PC-9 (cell line): ENCODE measurements at regions of chr7 and their contacts with region 1.

Region 1: GRCh38 chr7:21767300-21767900 is 178.3 kb downstream of the CDCA7L start:
- DNase-seq: peak; percentile 55 to 87
- H3K4me3 ChIP-seq: no peak overlapping the region
- H3K27ac ChIP-seq: no peak overlapping the region
- H3K4me1 ChIP-seq: no peaks in the 10 kb centered on the region
- H3K27me3 ChIP-seq: no peaks in the 10 kb centered on the region
- CTCF ChIP-seq: peak; percentile 97

Region 2: GRCh38 chr7:21256310-21256877 is 511.0 kb before region 1 on chr7:
- CTCF ChIA-PET with region 1: interaction called, 3 read pairs
- POLR2A ChIA-PET with region 1: no interaction called
- intact Hi-C with region 1: loop called (anchors 1 kb)
- DNase-seq: peak in 1 of 2 experiments; percentile 43
- H3K4me3 ChIP-seq: no peak overlapping the region
- H3K27ac ChIP-seq: no peak overlapping the region
- H3K4me1 ChIP-seq: no peaks in the 10 kb centered on the region
- H3K27me3 ChIP-seq: no peaks in the 10 kb centered on the region
- CTCF ChIP-seq: peak; percentile 92

Region 3: GRCh38 chr7:21514062-21514461 is 253.3 kb before region 1 on chr7:
- CTCF ChIA-PET with region 1: no interaction called
- POLR2A ChIA-PET with region 1: no interaction called
- intact Hi-C with region 1: loop called (anchors 10 kb)
- DNase-seq: no peak
- H3K4me3 ChIP-seq: no peak overlapping the region
- H3K27ac ChIP-seq: no peak overlapping the region
- H3K4me1 ChIP-seq: no peaks in the 10 kb centered on the region
- H3K27me3 ChIP-seq: no peaks in the 10 kb centered on the region
- CTCF ChIP-seq: no peak

Region 4: DNA sequence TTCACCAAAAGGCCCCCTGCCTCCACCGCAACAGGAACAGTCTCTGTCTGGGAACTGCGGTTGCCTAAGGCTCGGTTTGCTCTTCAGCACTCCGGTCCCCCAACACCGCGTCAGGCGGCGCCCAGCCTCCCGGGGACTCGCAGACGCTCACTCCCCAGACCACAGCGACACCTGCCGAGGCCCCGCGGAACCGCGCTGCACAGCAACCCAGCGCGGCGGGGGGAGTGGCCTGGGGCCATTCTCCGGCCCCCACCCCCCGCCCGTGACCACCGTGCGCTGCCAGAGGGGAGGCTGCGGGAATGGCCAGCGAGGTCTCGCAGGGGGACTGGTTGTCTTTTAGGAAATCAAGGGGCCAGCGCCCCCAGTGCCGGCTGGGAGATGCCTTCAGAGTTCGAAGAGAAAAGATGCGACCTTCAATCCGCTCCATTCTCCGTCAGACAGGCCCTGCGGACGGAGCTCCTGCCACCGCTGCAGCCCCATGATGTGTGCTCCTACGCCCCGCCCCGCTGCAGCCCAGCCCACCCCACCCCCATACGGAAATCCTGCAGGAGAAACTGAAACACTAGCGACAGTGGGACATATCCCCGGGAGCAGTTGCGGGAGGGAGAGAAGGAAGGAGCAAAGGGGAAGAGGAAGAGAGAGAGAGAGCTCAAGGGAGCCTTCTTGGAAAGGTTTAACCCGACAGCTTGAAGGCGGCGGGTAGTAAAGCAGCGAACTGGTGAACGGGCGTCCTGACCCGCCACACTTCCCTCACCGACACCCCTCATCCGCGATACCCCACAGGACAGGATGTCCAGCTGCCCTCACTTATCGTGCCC is 315.7 kb after region 1 on chr7:
- CTCF ChIA-PET with region 1: interaction called, 10 read pairs
- POLR2A ChIA-PET with region 1: no interaction called
- intact Hi-C with region 1: loop called (anchors 2 kb)
- DNase-seq: peak; percentile 64 to 90
- H3K4me3 ChIP-seq: peak overlapping the region; percentile 65
- H3K27ac ChIP-seq: no peak overlapping the region
- H3K4me1 ChIP-seq: peaks cover 11% of the 10 kb centered on the region; the same call in 1 of the 2 replicates
- H3K27me3 ChIP-seq: peaks cover 43% of the 10 kb centered on the region
- CTCF ChIP-seq: peak; percentile 99